B cell (primary cell): ENCODE measurements at regions of chr2 and their contacts with region 1.

Region 1: GRCh38 chr2:241102239-241102803 is at the start of gene MTERF4:
- DNase-seq: peak; percentile 93
- ATAC-seq: peak; percentile 91
- H3K4me3 ChIP-seq: peak within 1 kb of the TSS; percentile 73 to 95 (median 93)
- H3K4me3 Mint-ChIP-seq: peak within 1 kb of the TSS; percentile 98
- H3K27ac ChIP-seq: peak within 1 kb of the TSS; percentile 88 to 89
- H3K27ac Mint-ChIP-seq: peak within 1 kb of the TSS; percentile 97
- H3K4me1 ChIP-seq: peaks cover 43 to 56% of the 10 kb centered on the region in 2 donors
- H3K4me1 Mint-ChIP-seq: peaks cover 49% of the 10 kb centered on the region
- H3K27me3 ChIP-seq: no peaks in the 10 kb centered on the region
- H3K27me3 Mint-ChIP-seq: no peaks in the 10 kb centered on the region
- CTCF ChIP-seq: no peak
- total RNA-seq, gene MTERF4: 153 and 159 TPM in 2 replicates

Region 2: GRCh38 chr2:241125626-241126025 is 23.3 kb after region 1 on chr2:
- CTCF ChIA-PET with region 1: no interaction called
- POLR2A ChIA-PET with region 1: interaction called, 5 read pairs
- intact Hi-C with region 1: loop called (anchors 2 kb)
- DNase-seq: peak; percentile 63
- ATAC-seq: no peak
- H3K4me3 ChIP-seq: peak overlapping the region in 1 of 5 experiments; percentile 10
- H3K4me3 Mint-ChIP-seq: peak overlapping the region; percentile 67
- H3K27ac ChIP-seq: peak overlapping the region; percentile 94 to 97
- H3K27ac Mint-ChIP-seq: peak overlapping the region; percentile 99
- H3K4me1 ChIP-seq: peaks cover 44 to 61% of the 10 kb centered on the region in 2 donors
- H3K4me1 Mint-ChIP-seq: peaks cover 53% of the 10 kb centered on the region
- H3K27me3 ChIP-seq: no peaks in the 10 kb centered on the region
- H3K27me3 Mint-ChIP-seq: no peaks in the 10 kb centered on the region
- CTCF ChIP-seq: no peak

Region 3: DNA sequence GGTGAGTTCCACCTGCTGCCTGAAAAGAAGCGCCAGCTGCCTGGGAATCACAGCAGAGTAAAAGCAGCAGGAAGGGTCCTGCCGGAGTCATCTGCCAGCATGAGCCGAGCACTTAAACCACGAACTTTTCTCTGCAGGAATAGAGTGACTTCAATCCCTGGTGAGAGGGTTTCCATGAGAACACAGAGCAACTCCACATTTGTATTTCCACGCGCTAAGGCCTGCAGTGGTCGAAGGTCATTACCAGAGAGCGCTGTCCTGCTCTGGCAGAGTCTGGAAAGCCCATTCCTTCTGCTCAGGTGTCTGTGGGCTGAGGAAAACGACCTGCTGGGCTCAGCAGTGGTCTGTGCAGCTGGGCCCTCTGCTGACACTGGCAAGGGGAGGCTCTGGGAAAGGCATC is 40.3 kb after region 1 on chr2:
- CTCF ChIA-PET with region 1: no interaction called
- POLR2A ChIA-PET with region 1: no interaction called
- intact Hi-C with region 1: no loop called
- DNase-seq: no peak
- ATAC-seq: no peak
- H3K4me3 ChIP-seq: no peak overlapping the region
- H3K4me3 Mint-ChIP-seq: no peak overlapping the region
- H3K27ac ChIP-seq: no peak overlapping the region
- H3K27ac Mint-ChIP-seq: no peak overlapping the region
- H3K4me1 ChIP-seq: no peaks in the 10 kb centered on the region
- H3K4me1 Mint-ChIP-seq: peaks cover 4% of the 10 kb centered on the region
- H3K27me3 ChIP-seq: no peaks in the 10 kb centered on the region
- H3K27me3 Mint-ChIP-seq: no peaks in the 10 kb centered on the region
- CTCF ChIP-seq: no peak